ENCODE measurements at regions of chr18 and their contacts with region 1.

Region 1: GRCh38 chr18:3593904-3594661 is 144.1 kb downstream of the TGIF1 start:
- DNase-seq: peak; percentile 92
- ATAC-seq: peak; percentile 81
- H3K4me3 Mint-ChIP-seq: peak overlapping the region; percentile 92
- H3K27ac Mint-ChIP-seq: peak overlapping the region; percentile 99
- H3K4me1 Mint-ChIP-seq: peaks cover 58% of the 10 kb centered on the region
- H3K27me3 Mint-ChIP-seq: no peaks in the 10 kb centered on the region

Region 2: GRCh38 chr18:2978646-2979045 is 615.4 kb before region 1 on chr18:
- CTCF ChIA-PET with region 1: no interaction called
- POLR2A ChIA-PET with region 1: no interaction called
- intact Hi-C with region 1: loop called (anchors 5 kb)
- DNase-seq: peak; percentile 72
- ATAC-seq: peak; percentile 27
- H3K4me3 Mint-ChIP-seq: peak overlapping the region; percentile 74
- H3K27ac Mint-ChIP-seq: peak overlapping the region; percentile 98
- H3K4me1 Mint-ChIP-seq: peaks cover 83% of the 10 kb centered on the region
- H3K27me3 Mint-ChIP-seq: no peaks in the 10 kb centered on the region

Region 3: GRCh38 chr18:3281456-3282400 is 312.4 kb before region 1 on chr18:
- CTCF ChIA-PET with region 1: interaction called, 6 read pairs
- POLR2A ChIA-PET with region 1: no interaction called
- intact Hi-C with region 1: loop called in 1 of 2 experiments (anchors 2 kb)
- DNase-seq: no peak
- ATAC-seq: peak; percentile 90
- H3K4me3 Mint-ChIP-seq: no peak overlapping the region
- H3K27ac Mint-ChIP-seq: no peak overlapping the region
- H3K4me1 Mint-ChIP-seq: peaks cover 10% of the 10 kb centered on the region
- H3K27me3 Mint-ChIP-seq: no peaks in the 10 kb centered on the region

Region 4: GRCh38 chr18:3380384-3380961 is 213.6 kb before region 1 on chr18:
- CTCF ChIA-PET with region 1: interaction called, 4 read pairs
- POLR2A ChIA-PET with region 1: interaction called, 3 read pairs
- intact Hi-C with region 1: loop called (anchors 1 to 2 kb)
- DNase-seq: peak; percentile 49
- ATAC-seq: peak; percentile 97
- H3K4me3 Mint-ChIP-seq: no peak overlapping the region
- H3K27ac Mint-ChIP-seq: no peak overlapping the region
- H3K4me1 Mint-ChIP-seq: peaks cover 10% of the 10 kb centered on the region
- H3K27me3 Mint-ChIP-seq: peaks cover 10% of the 10 kb centered on the region

Region 5: DNA sequence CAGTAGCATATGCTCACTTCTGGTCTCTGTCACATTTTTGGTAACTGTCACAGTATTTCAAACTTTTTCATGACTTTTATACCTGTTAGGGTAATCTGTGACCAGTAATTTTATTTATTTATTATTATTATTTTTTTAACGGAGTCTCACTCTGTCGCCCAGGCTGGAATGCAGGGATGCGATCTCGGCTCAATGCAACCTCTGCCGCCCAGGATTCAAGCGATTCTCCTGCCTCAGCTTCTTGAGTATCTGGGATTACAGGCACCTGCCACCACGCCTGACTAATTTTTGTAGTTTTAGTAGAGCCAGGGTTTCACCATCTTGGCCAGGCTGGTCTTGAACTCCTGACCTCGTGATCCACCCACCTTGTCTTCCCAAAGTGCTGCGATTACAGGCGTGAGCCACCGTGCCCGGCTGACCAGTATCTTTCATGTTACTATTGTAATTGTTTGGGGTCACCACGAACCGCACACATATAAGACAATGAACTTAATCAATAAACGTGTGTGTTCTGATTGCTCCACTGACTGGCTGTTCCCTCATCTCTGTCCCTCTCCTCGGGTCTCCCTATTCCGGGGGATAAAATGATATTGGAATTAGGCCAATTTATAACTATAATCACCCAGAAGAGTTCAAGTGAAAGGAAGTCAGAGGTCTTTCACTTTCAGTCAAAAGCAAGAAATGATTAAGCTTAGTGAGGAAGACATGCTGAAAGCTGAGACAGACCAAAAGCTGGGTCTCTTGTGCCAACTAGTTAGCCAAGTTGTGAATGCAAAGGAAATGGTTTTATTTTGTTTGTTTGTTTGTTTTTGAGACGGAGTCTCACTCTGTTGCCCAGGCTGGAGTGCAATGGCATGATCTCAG is 121.2 kb before region 1 on chr18:
- CTCF ChIA-PET with region 1: interaction called, 12 read pairs
- POLR2A ChIA-PET with region 1: no interaction called
- intact Hi-C with region 1: loop called in 1 of 2 experiments (anchors 1 kb)
- DNase-seq: peak; percentile 23
- ATAC-seq: peak; percentile 89
- H3K4me3 Mint-ChIP-seq: no peak overlapping the region
- H3K27ac Mint-ChIP-seq: no peak overlapping the region
- H3K4me1 Mint-ChIP-seq: peaks cover 12% of the 10 kb centered on the region
- H3K27me3 Mint-ChIP-seq: peaks cover 2% of the 10 kb centered on the region

Region 6: DNA sequence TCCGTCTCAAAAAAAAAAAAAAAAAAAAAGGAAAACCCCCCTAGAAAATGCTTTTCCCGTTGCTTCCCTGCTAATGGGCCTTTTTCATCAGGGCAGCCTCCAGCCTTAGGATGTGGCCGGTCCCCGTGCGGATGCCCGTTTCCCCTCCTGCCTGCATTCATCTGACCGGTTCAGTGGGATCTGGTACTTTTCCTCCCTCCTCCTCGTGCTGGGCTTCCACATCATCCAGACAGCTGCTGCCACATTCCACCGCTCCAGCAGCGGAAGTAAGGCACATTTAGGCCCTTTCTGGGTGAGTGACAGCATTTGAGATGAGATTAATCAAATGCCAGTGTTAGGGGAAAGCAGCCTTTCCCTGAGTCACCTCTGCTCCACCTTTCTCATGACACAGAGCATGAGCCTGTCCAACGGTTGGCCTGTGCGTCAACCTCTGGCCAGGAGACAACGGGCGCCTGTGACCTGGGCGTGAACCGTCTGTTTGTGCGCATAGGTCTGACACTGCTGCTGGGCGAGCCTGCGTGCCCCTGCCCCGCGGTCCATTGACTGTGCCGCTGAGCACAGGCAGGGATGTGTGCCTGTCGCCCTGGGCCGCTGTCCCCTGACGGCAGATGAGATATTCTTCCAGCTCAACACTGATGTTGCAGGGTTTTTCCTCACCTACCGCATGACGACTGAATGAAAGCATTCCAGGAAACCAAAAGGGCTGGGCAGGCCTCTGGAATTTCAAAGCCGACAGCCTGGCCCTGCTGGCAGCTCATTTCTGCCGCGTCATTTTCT is 29.9 kb after region 1 on chr18:
- CTCF ChIA-PET with region 1: interaction called, 4 read pairs
- POLR2A ChIA-PET with region 1: no interaction called
- intact Hi-C with region 1: loop called (anchors 1 to 2 kb)
- DNase-seq: peak; percentile 68
- ATAC-seq: peak; percentile 50
- H3K4me3 Mint-ChIP-seq: peak overlapping the region; percentile 42
- H3K27ac Mint-ChIP-seq: peak overlapping the region; percentile 91
- H3K4me1 Mint-ChIP-seq: peaks cover 39% of the 10 kb centered on the region
- H3K27me3 Mint-ChIP-seq: no peaks in the 10 kb centered on the region

Region 7: GRCh38 chr18:3665780-3666525 is 71.9 kb after region 1 on chr18:
- CTCF ChIA-PET with region 1: interaction called, 60 read pairs
- POLR2A ChIA-PET with region 1: no interaction called
- intact Hi-C with region 1: loop called (anchors 1 to 2 kb)
- DNase-seq: peak; percentile 81
- ATAC-seq: peak; percentile 64
- H3K4me3 Mint-ChIP-seq: peak overlapping the region; percentile 28
- H3K27ac Mint-ChIP-seq: peak overlapping the region; percentile 17
- H3K4me1 Mint-ChIP-seq: peaks cover 36% of the 10 kb centered on the region
- H3K27me3 Mint-ChIP-seq: no peaks in the 10 kb centered on the region

Region 8: GRCh38 chr18:3914833-3915610 is 320.9 kb after region 1 on chr18:
- CTCF ChIA-PET with region 1: no interaction called
- POLR2A ChIA-PET with region 1: no interaction called
- intact Hi-C with region 1: no loop called
- DNase-seq: no peak
- ATAC-seq: no peak
- H3K4me3 Mint-ChIP-seq: no peak overlapping the region
- H3K27ac Mint-ChIP-seq: no peak overlapping the region
- H3K4me1 Mint-ChIP-seq: no peaks in the 10 kb centered on the region
- H3K27me3 Mint-ChIP-seq: peaks cover 5% of the 10 kb centered on the region

Region 9: GRCh38 chr18:4130734-4131719 is 536.9 kb after region 1 on chr18:
- CTCF ChIA-PET with region 1: no interaction called
- POLR2A ChIA-PET with region 1: no interaction called
- intact Hi-C with region 1: no loop called
- DNase-seq: no peak
- ATAC-seq: no peak
- H3K4me3 Mint-ChIP-seq: no peak overlapping the region
- H3K27ac Mint-ChIP-seq: no peak overlapping the region
- H3K4me1 Mint-ChIP-seq: no peaks in the 10 kb centered on the region
- H3K27me3 Mint-ChIP-seq: peaks cover 2% of the 10 kb centered on the region

Measured in activated CD4-positive, alpha-beta T cell treated with anti-CD3 and anti-CD28 coated beads for 36 hours (primary cell).